GM13976 (cell line): ENCODE measurements at regions of chr16 and their contacts with region 1.

Region 1: DNA sequence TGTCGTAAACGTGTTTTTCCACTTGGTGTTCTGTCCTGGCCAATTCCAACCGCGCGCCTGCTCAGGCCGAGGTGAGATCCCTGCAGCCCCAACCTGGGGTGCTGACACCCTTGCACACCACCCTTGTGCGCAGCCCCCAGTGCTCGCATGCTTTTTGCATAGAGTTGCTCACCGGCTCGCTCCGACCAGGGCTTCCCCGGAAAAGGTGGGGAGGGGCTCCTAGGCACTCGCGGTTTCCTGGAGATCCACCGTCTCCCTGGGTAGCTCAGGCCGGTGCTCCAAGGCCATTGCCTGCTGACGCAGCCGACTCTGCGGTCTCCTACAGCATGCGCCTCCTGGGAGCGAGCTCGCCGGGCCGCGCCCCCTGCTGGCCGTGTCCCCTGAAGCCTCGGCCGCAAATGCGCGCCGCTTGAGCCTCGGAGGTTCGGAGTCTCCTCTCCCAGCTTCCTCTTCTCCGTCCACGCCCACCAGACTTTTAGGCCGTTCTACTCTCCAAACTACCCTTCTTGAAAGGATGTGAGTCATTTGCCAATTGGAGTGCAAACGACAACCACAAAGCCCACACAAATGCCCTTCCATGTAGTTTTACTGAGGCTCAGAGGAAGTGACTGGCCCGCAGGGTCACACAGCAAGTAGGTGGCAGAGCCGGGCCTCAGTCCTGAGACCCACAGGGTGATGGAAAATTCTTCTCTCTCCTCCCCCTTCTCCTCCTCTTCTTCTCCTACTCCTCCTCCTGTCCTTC is 7.2 kb upstream of the PDP2 start:
- DNase-seq: peak; percentile 91
- CTCF ChIP-seq: peak; percentile 98

Region 2: GRCh38 chr16:66406534-66407221 is 466.4 kb before region 1 on chr16:
- in situ Hi-C with region 1: loop called (anchors 25 kb)
- DNase-seq: peak; percentile 90
- CTCF ChIP-seq: peak; percentile 83